ENCODE measurements at regions of chr19 and their contacts with region 1.

Region 1: GRCh38 chr19:23914402-23915301 is at the start of gene ZNF726:
- DNase-seq: peak; percentile 66 to 91 (median 87)
- ATAC-seq: peak; percentile 99
- H3K4me3 ChIP-seq: peak within 1 kb of the TSS; percentile 61
- H3K4me3 Mint-ChIP-seq: peak within 1 kb of the TSS; percentile 90 to 97 (median 94)
- H3K27ac ChIP-seq: peak within 1 kb of the TSS; percentile 68
- H3K27ac Mint-ChIP-seq: peak within 1 kb of the TSS; percentile 69 to 96 (median 91)
- H3K4me1 ChIP-seq: peaks cover 0 to 3% of the 10 kb centered on the region in 2 donors
- H3K4me1 Mint-ChIP-seq: peaks cover 0 to 30% (median 14%) of the 10 kb centered on the region in 7 donors
- H3K27me3 ChIP-seq: no peaks in the 10 kb centered on the region
- H3K27me3 Mint-ChIP-seq: no peaks in the 10 kb centered on the region
- total RNA-seq, gene ZNF726: 3.3 to 6.8 (median 4.0) TPM

Region 2: DNA sequence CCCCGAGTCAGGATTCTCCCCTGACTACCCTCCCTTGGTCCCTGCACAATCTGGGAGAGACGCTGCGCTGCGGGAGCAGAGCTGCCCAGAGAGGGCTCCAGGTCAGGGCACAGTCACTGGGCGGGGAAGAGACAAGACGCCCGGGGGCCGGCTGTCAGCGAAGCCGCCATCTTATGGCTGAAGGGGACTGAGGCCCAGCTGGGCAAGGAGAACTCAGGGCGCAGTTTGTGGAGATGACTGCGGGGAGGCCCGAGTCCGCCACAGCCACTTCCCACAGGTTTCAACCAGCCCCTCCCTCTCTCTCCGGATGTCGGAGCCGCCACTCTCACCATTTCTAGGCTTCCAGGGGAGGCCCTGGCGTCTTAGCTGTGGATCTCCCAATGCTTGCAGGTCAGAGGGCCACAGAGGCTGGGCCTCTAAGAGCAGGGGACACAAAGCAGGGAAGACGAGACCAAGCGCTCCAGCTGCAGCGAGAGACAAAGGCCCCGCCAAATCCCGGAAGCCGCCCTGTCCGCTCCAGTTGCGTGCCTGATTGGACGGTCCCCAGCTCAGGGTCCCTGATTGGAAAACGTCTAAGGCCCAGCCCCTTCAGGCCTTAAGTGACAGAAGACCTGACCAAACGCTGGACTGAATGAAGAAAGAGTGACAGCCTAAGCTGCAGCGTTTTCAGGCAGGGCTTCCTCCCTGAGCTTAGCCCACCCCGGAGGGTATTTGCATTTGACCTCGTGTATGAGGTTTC is 664.6 kb before region 1 on chr19 and contains the start of gene ZNF724:
- CTCF ChIA-PET with region 1: no interaction called
- POLR2A ChIA-PET with region 1: no interaction called
- intact Hi-C with region 1: loop called in 1 of 2 experiments (anchors 1 kb)
- DNase-seq: peak; percentile 66 to 91 (median 88)
- ATAC-seq: peak; percentile 100
- H3K4me3 ChIP-seq: peak within 1 kb of the TSS; percentile 84
- H3K4me3 Mint-ChIP-seq: peak within 1 kb of the TSS; percentile 95 to 99 (median 96)
- H3K27ac ChIP-seq: peak within 1 kb of the TSS; percentile 72
- H3K27ac Mint-ChIP-seq: peak within 1 kb of the TSS; percentile 61 to 96 (median 89)
- H3K4me1 ChIP-seq: peaks cover 0 to 6% of the 10 kb centered on the region in 2 donors
- H3K4me1 Mint-ChIP-seq: peaks cover 6 to 22% (median 10%) of the 10 kb centered on the region in 7 donors
- H3K27me3 ChIP-seq: no peaks in the 10 kb centered on the region
- H3K27me3 Mint-ChIP-seq: no peaks in the 10 kb centered on the region
- total RNA-seq, gene ZNF724: 2.9 to 11.3 (median 6.8) TPM

Region 3: DNA sequence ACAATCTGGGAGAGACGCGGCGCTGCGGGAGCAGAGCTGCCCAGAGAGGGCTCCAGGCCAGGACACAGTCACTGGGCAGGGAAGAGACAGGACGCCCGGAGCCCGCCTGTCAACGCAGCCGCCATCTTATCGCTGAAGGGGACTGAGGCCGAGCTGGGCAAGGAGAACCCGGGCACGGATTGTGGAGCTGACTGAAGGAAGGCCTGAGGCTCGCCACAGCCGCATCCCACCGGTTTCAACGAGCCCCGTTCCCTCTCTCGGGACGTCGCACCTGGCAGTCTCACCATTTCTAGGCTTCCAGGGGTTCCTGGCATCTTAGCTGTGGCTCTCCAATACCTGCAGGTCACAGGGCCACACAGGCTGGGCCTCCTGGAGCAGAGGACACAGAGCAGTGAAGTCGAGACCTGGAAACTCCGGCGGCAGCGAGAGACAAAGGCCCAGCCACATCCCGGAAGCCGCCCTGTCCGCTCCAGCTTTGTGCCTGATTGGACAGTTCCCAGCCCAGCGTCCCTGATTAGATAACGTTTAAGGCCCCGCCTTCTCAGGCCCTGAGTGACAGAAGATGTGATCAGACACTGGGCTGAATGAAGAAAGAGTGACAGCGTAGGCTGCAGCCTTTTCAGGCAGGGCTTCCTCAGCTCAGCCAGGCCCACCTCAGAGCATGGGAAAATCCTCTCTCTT is 519.5 kb before region 1 on chr19 and contains the start of gene ZNF91:
- CTCF ChIA-PET with region 1: no interaction called
- POLR2A ChIA-PET with region 1: interaction called, 3 read pairs
- intact Hi-C with region 1: loop called (anchors 1 to 5 kb)
- DNase-seq: peak; percentile 73 to 96 (median 92)
- ATAC-seq: peak; percentile 98
- H3K4me3 ChIP-seq: peak within 1 kb of the TSS; percentile 96
- H3K4me3 Mint-ChIP-seq: peak within 1 kb of the TSS; percentile 96 to 99 (median 98)
- H3K27ac ChIP-seq: peak within 1 kb of the TSS; percentile 96
- H3K27ac Mint-ChIP-seq: peak within 1 kb of the TSS; percentile 94 to 99 (median 98)
- H3K4me1 ChIP-seq: peaks cover 12% of the 10 kb centered on the region in 2 donors
- H3K4me1 Mint-ChIP-seq: peaks cover 4 to 43% (median 37%) of the 10 kb centered on the region in 7 donors
- H3K27me3 ChIP-seq: no peaks in the 10 kb centered on the region
- H3K27me3 Mint-ChIP-seq: no peaks in the 10 kb centered on the region
- total RNA-seq, gene ZNF91: 40.5 to 165 (median 90.6) TPM

Region 4: DNA sequence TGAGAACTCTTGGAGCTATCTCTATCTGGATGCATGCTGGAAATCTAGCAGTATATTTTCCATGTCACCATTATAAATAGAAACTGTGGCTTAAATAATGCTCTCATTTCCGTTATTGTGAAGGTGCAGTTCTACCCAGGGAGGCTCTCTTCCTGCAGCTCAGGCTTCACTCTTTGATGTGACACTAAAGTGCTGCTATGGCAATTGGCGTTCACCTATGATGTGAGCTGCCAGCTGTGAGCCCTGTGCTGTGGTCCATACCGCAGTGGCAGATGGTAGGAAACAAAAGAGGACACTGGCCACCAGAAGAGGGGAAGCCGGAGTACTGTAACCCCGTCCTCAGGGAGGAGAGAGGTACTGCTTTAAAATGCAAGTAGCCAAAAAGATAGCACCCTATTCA is 115.3 kb before region 1 on chr19:
- CTCF ChIA-PET with region 1: no interaction called
- POLR2A ChIA-PET with region 1: interaction called, 7 read pairs
- intact Hi-C with region 1: loop called in 1 of 2 experiments (anchors 1 kb)
- DNase-seq: peak in 7 of 9 donors; percentile 46 to 66 (median 61)
- ATAC-seq: peak; percentile 92
- H3K4me3 ChIP-seq: peak overlapping the region; percentile 31
- H3K4me3 Mint-ChIP-seq: peak overlapping the region; percentile 77 to 91 (median 84)
- H3K27ac ChIP-seq: peak overlapping the region; percentile 67
- H3K27ac Mint-ChIP-seq: peak overlapping the region; percentile 84 to 97 (median 92)
- H3K4me1 ChIP-seq: peaks cover 6% of the 10 kb centered on the region in 2 donors
- H3K4me1 Mint-ChIP-seq: peaks cover 10 to 49% (median 34%) of the 10 kb centered on the region in 7 donors
- H3K27me3 ChIP-seq: no peaks in the 10 kb centered on the region
- H3K27me3 Mint-ChIP-seq: no peaks in the 10 kb centered on the region

Region 5: DNA sequence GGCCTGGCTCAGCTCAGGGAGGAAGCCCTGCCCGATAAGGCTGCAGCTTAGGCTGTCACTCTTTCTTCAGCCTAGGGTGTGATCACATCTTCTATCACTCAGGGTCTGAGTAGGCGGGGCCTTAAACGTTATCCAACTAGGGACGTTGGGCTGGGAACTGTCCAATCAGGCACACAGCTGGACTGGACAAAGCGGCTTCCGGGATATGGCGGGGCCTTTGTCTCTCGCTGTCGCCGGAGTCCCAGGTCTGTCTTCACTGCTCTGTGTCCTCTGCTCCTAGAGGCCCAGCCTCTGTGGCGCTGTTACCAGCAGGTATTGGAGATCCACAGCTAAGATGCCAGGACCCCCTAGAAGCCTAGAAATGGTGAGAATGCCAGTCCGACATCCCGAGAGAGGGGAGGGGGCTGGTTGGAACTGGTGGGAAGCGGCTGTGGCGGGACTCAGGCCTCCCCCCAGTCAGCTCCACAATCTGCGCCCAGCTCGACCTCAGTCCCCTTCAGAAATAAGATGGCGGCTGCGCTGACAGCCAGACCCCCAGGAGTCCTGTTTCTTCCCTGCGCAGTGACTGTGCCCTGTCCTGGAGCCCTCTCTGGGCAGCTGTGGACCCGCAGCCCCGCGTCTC is 172.4 kb after region 1 on chr19 and contains the start of gene ZNF254:
- CTCF ChIA-PET with region 1: no interaction called
- POLR2A ChIA-PET with region 1: no interaction called
- intact Hi-C with region 1: loop called (anchors 2 to 5 kb)
- DNase-seq: peak; percentile 48 to 75 (median 65)
- ATAC-seq: peak; percentile 99
- H3K4me3 ChIP-seq: peak within 1 kb of the TSS; percentile 92
- H3K4me3 Mint-ChIP-seq: peak within 1 kb of the TSS; percentile 90 to 96 (median 93)
- H3K27ac ChIP-seq: peak within 1 kb of the TSS; percentile 83
- H3K27ac Mint-ChIP-seq: peak within 1 kb of the TSS; percentile 90 to 96 (median 93)
- H3K4me1 ChIP-seq: no peaks in the 10 kb centered on the region
- H3K4me1 Mint-ChIP-seq: peaks cover 3 to 17% (median 5%) of the 10 kb centered on the region in 7 donors
- H3K27me3 ChIP-seq: no peaks in the 10 kb centered on the region
- H3K27me3 Mint-ChIP-seq: no peaks in the 10 kb centered on the region
- total RNA-seq, gene ZNF254: 10.8 to 17.1 (median 15.5) TPM